ENCODE measurements at regions of chr7 and their contacts with region 1.

Region 1: GRCh38 chr7:139600306-139600705 is 76.8 kb downstream of the CLEC2L start:
- DNase-seq: no peak
- H3K27ac ChIP-seq: no peak overlapping the region
- CTCF ChIP-seq: no peak

Region 2: DNA sequence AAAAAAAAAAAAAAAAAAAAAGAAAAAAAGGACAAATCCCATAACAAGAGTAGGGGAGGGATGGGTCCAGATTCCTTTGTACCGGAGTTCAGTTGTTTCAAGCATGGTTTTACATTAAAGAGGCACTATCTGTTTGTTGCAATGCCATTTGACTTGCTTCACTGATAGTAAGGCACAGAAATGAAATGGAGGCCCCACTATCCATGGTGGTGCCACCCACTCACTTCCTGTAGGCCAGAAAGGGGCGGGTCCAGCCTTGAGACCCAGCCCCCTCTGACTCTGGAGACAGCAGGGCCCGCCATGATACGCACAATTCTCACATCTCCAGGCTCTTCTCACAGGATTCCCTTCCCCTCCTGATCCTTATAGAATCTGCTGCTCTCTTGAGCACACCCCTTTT is 23.2 kb after region 1 on chr7:
- CTCF ChIA-PET with region 1: interaction called, 4 read pairs
- POLR2A ChIA-PET with region 1: interaction called, 17 read pairs
- DNase-seq: no peak
- H3K27ac ChIP-seq: no peak overlapping the region
- CTCF ChIP-seq: no peak